Psoas muscle (tissue), 8 donors: ENCODE measurements at regions of chr1 and their contacts with region 1.

Region 1: GRCh38 chr1:185670187-185670627 is 64.0 kb upstream of the HMCN1 start:
- DNase-seq: no peak
- ATAC-seq: peak in 1 of 4 donors; percentile 42
- H3K4me3 ChIP-seq: no peak overlapping the region
- H3K27ac ChIP-seq: no peak overlapping the region
- H3K4me1 ChIP-seq: peaks cover 3% of the 10 kb centered on the region
- H3K27me3 ChIP-seq: no peaks in the 10 kb centered on the region
- CTCF ChIP-seq: no peak

Region 2: DNA sequence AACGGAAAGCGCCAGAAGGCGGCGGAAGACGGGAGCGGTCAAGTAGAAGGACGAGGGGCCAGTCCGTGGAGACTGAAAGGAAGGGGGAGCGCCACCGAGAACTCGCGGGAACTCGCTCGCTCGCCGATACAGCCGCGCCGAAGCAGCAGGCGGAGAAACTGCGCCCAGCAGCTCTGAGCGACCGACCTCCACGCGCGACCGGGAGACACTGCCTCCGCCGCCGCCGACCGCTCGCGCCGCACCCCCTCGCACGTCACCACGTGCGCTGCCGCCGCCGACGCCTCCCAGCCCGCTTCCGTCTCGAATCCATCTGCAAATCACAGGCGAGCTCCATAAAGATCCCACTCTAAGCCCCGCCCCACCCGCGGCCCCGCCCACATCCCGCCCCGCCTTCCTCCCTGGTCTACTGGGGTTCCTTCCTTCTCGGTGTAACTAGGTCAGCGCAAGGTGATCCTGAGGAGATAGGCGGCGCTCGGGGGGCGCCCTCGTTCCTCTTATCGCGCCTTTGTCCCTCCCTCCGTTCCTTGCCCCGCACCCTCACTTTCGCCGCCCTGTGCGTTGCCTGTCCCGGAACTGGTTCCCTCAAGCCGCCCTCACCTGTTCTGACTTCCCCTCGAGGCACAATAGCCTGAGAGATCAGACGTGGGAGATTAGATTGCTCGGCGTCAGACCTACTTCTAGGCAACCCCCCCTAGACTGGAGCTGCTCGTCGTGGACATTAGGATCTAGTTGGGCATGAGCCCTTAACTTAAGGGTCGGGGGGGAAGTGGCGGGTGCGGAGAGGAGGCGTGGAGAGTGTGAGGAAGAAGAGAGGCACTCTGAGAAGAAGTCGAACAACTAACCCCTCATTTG is 352.9 kb before region 1 on chr1 and contains the start of gene IVNS1ABP:
- intact Hi-C with region 1: loop called (anchors 5 to 10 kb)
- DNase-seq: peak; percentile 93 to 96
- ATAC-seq: peak; percentile 92 to 93 (median 92)
- H3K4me3 ChIP-seq: peak within 1 kb of the TSS; percentile 92
- H3K27ac ChIP-seq: peak within 1 kb of the TSS; percentile 91
- H3K4me1 ChIP-seq: peaks cover 33% of the 10 kb centered on the region
- H3K27me3 ChIP-seq: no peaks in the 10 kb centered on the region
- CTCF ChIP-seq: no peak
- total RNA-seq, gene IVNS1ABP: 27.6 to 49.9 (median 41.9) TPM

Region 3: DNA sequence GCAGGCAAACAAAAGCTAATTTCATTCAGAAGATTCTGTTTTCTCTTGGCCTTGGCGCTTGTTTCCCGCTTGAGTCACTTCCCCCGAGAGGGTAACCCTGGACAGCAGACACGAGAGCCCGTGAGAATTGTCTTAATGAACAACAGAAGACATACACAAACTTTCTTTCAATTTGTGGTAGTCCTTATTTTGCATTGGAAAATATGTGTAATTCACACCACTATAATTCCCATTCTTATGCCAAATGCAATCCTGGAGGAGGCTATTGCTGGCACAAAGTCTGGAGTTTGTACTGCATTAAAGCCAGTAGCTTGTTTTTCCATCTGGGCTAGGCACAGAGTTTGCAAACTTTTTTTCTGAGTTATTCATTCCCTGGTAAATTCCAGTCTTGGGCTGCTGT is 243.4 kb before region 1 on chr1:
- intact Hi-C with region 1: loop called in 1 of 2 experiments (anchors 5 kb)
- DNase-seq: peak in 1 of 2 donors; percentile 30
- ATAC-seq: peak in 2 of 4 donors; percentile 55 to 56
- H3K4me3 ChIP-seq: no peak overlapping the region
- H3K27ac ChIP-seq: peak overlapping the region; percentile 46
- H3K4me1 ChIP-seq: no peaks in the 10 kb centered on the region
- H3K27me3 ChIP-seq: no peaks in the 10 kb centered on the region
- CTCF ChIP-seq: no peak

Region 4: DNA sequence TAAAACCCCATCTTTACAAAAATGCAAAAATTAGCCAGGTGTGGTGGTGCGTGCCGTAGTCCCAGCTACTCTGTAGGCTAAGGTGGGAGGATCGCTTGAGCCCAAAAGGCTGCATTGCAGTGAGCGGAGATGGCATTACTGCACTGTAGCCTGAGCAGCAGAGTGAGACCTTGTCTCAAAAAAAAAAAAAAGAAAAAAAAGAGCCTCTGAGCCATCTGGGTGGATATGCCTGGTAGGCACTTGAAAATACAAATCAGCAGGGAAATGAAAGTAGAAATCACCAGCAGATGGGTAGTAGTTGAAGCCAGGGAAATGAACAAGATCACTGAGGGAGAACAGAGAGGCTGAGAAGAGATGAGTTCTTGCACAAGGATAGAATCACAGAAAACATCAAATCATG is 67.0 kb before region 1 on chr1:
- intact Hi-C with region 1: no loop called
- DNase-seq: no peak
- ATAC-seq: no peak
- H3K4me3 ChIP-seq: no peak overlapping the region
- H3K27ac ChIP-seq: no peak overlapping the region
- H3K4me1 ChIP-seq: no peaks in the 10 kb centered on the region
- H3K27me3 ChIP-seq: no peaks in the 10 kb centered on the region
- CTCF ChIP-seq: no peak